Activated CD4-positive, alpha-beta memory T cell treated with anti-CD3 and anti-CD28 coated beads for 36 hours (primary cell): ENCODE measurements at regions of chr3 and their contacts with region 1.

Region 1: GRCh38 chr3:32117324-32117723 is 10.9 kb downstream of the GPD1L start:
- DNase-seq: no peak
- H3K4me3 Mint-ChIP-seq: no peak overlapping the region
- H3K27ac Mint-ChIP-seq: no peak overlapping the region
- H3K4me1 Mint-ChIP-seq: peaks cover 54% of the 10 kb centered on the region
- H3K27me3 Mint-ChIP-seq: no peaks in the 10 kb centered on the region

Region 2: GRCh38 chr3:31077021-31077601 is 1040.2 kb before region 1 on chr3:
- CTCF ChIA-PET with region 1: no interaction called
- POLR2A ChIA-PET with region 1: no interaction called
- intact Hi-C with region 1: loop called (anchors 1 kb)
- DNase-seq: peak; percentile 73
- H3K4me3 Mint-ChIP-seq: no peak overlapping the region
- H3K27ac Mint-ChIP-seq: peak overlapping the region; percentile 1
- H3K4me1 Mint-ChIP-seq: peaks cover 18% of the 10 kb centered on the region
- H3K27me3 Mint-ChIP-seq: no peaks in the 10 kb centered on the region

Region 3: GRCh38 chr3:31979006-31979697 is 138.2 kb before region 1 on chr3:
- CTCF ChIA-PET with region 1: no interaction called
- POLR2A ChIA-PET with region 1: no interaction called
- intact Hi-C with region 1: loop called (anchors 2 kb)
- DNase-seq: no peak
- H3K4me3 Mint-ChIP-seq: peak overlapping the region; percentile 57
- H3K27ac Mint-ChIP-seq: peak overlapping the region; percentile 50
- H3K4me1 Mint-ChIP-seq: peaks cover 28% of the 10 kb centered on the region
- H3K27me3 Mint-ChIP-seq: peaks cover 62% of the 10 kb centered on the region

Region 4: DNA sequence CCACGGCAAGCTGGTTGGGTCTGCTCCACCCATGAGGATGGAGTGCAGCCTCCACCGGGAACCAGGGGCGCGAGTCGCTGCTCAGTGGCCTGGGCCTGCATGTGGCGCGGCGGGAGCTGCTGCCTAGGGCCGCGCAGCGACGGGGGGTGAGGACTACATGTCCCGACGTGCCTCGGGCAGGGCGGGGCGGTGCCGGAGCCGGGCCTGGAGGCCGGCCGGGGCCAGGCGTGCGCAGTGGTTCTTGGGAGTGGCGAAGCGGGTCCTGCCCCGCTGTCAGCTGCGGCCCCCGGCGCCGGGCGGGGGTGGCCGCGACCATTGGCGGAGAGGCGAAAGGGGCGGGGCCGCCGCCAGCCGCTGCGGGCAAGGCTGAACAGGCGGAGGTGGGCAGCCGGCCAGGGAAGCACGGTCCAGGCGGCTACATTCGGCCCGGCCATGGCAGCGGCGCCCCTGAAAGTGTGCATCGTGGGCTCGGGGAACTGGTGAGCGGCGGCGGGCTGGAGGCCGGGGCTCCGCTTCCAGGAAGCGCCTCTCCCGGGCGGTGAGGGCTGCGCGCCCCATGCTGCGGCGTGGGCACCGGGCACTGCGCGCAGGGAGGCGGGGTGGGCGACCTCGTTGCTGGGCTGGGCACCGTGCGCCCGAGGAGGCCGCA is 10.9 kb before region 1 on chr3 and contains the start of gene GPD1L:
- CTCF ChIA-PET with region 1: interaction called, 4 read pairs
- POLR2A ChIA-PET with region 1: interaction called, 4 read pairs
- intact Hi-C with region 1: loop called (anchors 1 kb)
- DNase-seq: peak; percentile 95
- H3K4me3 Mint-ChIP-seq: peak within 1 kb of the TSS; percentile 94
- H3K27ac Mint-ChIP-seq: peak within 1 kb of the TSS; percentile 76
- H3K4me1 Mint-ChIP-seq: peaks cover 37% of the 10 kb centered on the region
- H3K27me3 Mint-ChIP-seq: no peaks in the 10 kb centered on the region
- total RNA-seq, gene GPD1L: 10.9 to 12.2 TPM

Region 5: GRCh38 chr3:32138545-32139104 is 21.3 kb after region 1 on chr3:
- CTCF ChIA-PET with region 1: interaction called, 3 read pairs
- POLR2A ChIA-PET with region 1: no interaction called
- intact Hi-C with region 1: loop called (anchors 2 kb)
- DNase-seq: peak; percentile 45
- H3K4me3 Mint-ChIP-seq: no peak overlapping the region
- H3K27ac Mint-ChIP-seq: no peak overlapping the region
- H3K4me1 Mint-ChIP-seq: peaks cover 18% of the 10 kb centered on the region
- H3K27me3 Mint-ChIP-seq: no peaks in the 10 kb centered on the region

Region 6: DNA sequence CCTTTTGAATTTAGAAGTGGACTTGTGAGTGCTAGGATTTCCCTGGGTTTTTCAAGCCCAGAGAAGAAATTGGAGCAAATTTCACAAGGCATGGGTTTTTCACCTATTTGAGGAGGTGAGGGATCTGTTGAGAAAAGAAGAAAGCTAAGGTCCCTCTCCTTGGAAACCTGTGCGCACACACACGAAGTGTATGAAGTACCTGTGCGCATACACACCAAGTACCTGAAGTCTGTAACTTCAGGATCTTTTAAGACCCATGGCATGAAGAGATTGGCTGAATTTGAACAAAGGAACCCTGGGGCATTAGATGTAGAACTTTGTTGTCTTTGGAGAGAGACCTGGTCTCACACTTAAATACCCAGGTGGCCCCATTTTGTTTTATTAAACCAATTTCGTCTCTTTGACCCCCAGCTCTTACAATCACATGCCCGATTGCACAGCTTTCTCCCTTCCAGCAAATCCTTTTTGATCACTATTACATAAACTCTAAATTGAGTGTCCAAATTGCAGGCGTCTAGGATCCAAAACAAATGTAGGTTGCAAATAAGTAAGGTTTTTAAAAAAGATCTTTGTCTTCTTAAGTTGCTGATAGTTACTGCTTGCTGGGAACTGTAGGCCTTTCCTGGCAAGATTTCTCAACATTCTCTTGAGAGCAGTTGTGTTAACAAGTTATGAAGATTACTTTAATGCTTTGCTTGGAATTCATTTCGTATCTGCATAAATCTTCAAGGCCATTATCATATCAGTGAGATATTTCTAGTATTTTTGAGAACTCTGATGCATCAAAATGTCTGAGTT is 185.5 kb after region 1 on chr3:
- CTCF ChIA-PET with region 1: no interaction called
- POLR2A ChIA-PET with region 1: no interaction called
- intact Hi-C with region 1: loop called (anchors 5 kb)
- DNase-seq: no peak
- H3K4me3 Mint-ChIP-seq: peak overlapping the region; percentile 60
- H3K27ac Mint-ChIP-seq: peak overlapping the region; percentile 86
- H3K4me1 Mint-ChIP-seq: peaks cover 66% of the 10 kb centered on the region
- H3K27me3 Mint-ChIP-seq: no peaks in the 10 kb centered on the region

Region 7: GRCh38 chr3:32438596-32439344 is 321.4 kb after region 1 on chr3:
- CTCF ChIA-PET with region 1: no interaction called
- POLR2A ChIA-PET with region 1: no interaction called
- intact Hi-C with region 1: loop called (anchors 10 kb)
- DNase-seq: peak; percentile 63
- H3K4me3 Mint-ChIP-seq: peak overlapping the region; percentile 21
- H3K27ac Mint-ChIP-seq: peak overlapping the region; percentile 87
- H3K4me1 Mint-ChIP-seq: peaks cover 74% of the 10 kb centered on the region
- H3K27me3 Mint-ChIP-seq: no peaks in the 10 kb centered on the region